ENCODE measurements at regions of chr1 and their contacts with region 1.

Region 1: GRCh38 chr1:203346060-203346768 is 4.7 kb downstream of the FMOD start:
- DNase-seq: no peak
- ATAC-seq: no peak
- H3K4me3 ChIP-seq: no peak overlapping the region
- H3K27ac ChIP-seq: peak overlapping the region in 3 of 10 donors; percentile 12 to 39 (median 39)
- H3K4me1 ChIP-seq: peaks cover 0 to 38% (median 16%) of the 10 kb centered on the region in 9 donors
- H3K27me3 ChIP-seq: peaks cover 0 to 14% (median 0%) of the 10 kb centered on the region in 7 donors
- CTCF ChIP-seq: peak in 2 of 9 donors; percentile 5 to 12

Region 2: GRCh38 chr1:203031467-203031866 is 314.7 kb before region 1 on chr1:
- intact Hi-C with region 1: loop called in 2 of 10 experiments (anchors 5 to 10 kb)
- DNase-seq: no peak
- ATAC-seq: no peak
- H3K4me3 ChIP-seq: no peak overlapping the region
- H3K27ac ChIP-seq: no peak overlapping the region
- H3K4me1 ChIP-seq: peaks cover 7 to 60% (median 37%) of the 10 kb centered on the region in 9 donors
- H3K27me3 ChIP-seq: peaks cover 0 to 12% (median 0%) of the 10 kb centered on the region in 7 donors
- CTCF ChIP-seq: peak in 3 of 9 donors; percentile 10 to 36 (median 23)

Region 3: GRCh38 chr1:203381151-203381751 is 35.0 kb after region 1 on chr1:
- intact Hi-C with region 1: no loop called
- DNase-seq: no peak
- ATAC-seq: peak in 3 of 8 donors; percentile 9 to 30 (median 18)
- H3K4me3 ChIP-seq: no peak overlapping the region
- H3K27ac ChIP-seq: peak overlapping the region in 2 of 10 donors; percentile 39 to 41
- H3K4me1 ChIP-seq: peaks cover 9 to 47% (median 34%) of the 10 kb centered on the region in 9 donors
- H3K27me3 ChIP-seq: no peaks in the 10 kb centered on the region
- CTCF ChIP-seq: no peak